ENCODE measurements at regions of chr13 and their contacts with region 1.

Region 1: DNA sequence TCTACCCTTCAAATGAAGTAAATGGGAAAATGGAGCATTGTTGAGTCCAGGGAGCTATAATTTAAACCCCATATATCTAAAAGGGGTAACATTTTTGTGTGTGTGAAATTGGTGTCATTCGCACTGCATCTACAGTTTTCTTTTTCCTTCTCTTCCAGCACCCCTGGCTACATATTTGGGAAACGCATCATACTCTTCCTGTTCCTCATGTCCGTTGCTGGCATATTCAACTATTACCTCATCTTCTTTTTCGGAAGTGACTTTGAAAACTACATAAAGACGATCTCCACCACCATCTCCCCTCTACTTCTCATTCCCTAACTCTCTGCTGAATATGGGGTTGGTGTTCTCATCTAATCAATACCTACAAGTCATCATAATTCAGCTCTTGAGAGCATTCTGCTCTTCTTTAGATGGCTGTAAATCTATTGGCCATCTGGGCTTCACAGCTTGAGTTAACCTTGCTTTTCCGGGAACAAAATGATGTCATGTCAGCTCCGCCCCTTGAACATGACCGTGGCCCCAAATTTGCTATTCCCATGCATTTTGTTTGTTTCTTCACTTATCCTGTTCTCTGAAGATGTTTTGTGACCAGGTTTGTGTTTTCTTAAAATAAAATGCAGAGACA is 28.6 kb downstream of the ALOX5AP start:
- DNase-seq: no peak
- H3K4me3 Mint-ChIP-seq: no peak overlapping the region
- H3K27ac Mint-ChIP-seq: no peak overlapping the region
- H3K4me1 Mint-ChIP-seq: peaks cover 25% of the 10 kb centered on the region
- H3K27me3 Mint-ChIP-seq: no peaks in the 10 kb centered on the region

Region 2: DNA sequence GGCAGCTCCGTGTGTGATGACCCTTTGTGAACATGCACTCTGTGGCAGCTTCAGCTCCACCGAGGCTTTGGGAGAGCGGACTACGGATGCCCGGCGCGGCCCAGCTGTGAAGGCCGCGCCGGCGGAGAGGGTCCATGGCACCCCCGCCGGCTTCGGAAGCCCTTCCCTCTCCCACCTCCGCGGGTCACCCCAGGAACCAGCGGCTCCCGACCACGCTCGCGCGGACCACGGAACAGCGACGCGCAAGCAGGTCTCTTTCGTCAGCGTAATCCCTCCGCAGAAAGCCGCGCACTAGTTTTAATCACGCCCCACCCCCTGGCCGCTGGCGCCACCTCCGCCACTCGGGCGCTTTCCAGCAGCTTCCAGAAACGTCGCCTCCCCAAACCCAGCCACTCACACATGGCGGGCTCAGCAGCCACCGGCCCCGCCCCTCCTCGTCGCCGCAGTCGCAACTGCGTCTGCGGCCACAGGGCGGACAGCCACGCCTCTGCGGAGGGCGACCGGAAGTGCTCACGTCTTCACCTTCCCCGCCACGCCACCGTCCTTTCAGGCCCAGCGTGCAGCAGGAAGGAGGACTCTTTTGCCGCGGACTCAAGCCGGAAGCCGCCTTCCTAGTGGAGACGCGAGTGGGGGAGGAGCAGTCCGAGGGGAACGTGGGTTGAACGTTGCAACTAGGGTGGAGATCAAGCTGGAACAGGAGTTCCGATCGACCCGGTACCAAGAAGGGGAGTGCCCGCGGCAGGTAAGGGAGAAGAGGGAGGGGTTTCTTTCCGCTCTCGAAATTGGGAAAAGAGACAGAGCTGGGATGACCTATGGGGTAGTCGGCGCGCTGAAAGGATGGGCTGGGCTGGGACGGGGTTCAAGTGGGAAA is 146.3 kb before region 1 on chr13 and contains the start of gene USPL1:
- CTCF ChIA-PET with region 1: no interaction called
- POLR2A ChIA-PET with region 1: no interaction called
- DNase-seq: peak; percentile 98
- H3K4me3 Mint-ChIP-seq: no peak within 1 kb of the TSS
- H3K27ac Mint-ChIP-seq: no peak within 1 kb of the TSS
- H3K4me1 Mint-ChIP-seq: peaks cover 20% of the 10 kb centered on the region
- H3K27me3 Mint-ChIP-seq: no peaks in the 10 kb centered on the region
- total RNA-seq, gene USPL1: 18.8 to 19.7 TPM

Region 3: DNA sequence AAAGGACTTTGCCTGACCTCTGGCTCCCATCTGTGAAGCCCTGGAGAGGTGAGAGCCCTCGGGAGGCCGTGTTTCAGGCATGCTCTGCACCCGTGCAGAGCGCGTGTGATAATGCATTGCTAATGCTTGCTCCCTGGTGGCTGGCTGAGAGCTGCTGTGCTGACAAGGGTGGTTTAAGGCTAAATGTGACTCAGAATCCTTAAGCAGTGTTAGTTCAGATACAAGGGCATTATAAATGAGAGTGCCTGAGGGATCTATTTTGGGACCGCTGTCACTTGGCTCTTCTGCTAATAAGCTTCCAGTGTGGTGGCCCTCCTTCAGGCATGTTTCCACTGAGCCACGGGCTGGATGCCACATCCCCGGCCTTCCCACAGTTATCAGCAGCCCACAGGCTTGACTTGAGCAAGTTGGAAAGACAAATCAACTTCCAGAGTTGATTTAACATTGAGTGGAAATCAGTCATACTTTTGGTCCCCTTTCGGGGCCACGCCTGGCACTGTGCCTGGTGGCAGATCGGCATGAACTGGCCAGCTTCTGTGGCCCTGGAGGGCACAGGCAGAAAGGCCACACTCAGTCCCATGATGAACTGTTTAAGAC is 11.6 kb before region 1 on chr13:
- CTCF ChIA-PET with region 1: interaction called, 11 read pairs
- POLR2A ChIA-PET with region 1: interaction called, 3 read pairs
- DNase-seq: no peak
- H3K4me3 Mint-ChIP-seq: no peak overlapping the region
- H3K27ac Mint-ChIP-seq: no peak overlapping the region
- H3K4me1 Mint-ChIP-seq: peaks cover 33% of the 10 kb centered on the region
- H3K27me3 Mint-ChIP-seq: no peaks in the 10 kb centered on the region

Region 4: DNA sequence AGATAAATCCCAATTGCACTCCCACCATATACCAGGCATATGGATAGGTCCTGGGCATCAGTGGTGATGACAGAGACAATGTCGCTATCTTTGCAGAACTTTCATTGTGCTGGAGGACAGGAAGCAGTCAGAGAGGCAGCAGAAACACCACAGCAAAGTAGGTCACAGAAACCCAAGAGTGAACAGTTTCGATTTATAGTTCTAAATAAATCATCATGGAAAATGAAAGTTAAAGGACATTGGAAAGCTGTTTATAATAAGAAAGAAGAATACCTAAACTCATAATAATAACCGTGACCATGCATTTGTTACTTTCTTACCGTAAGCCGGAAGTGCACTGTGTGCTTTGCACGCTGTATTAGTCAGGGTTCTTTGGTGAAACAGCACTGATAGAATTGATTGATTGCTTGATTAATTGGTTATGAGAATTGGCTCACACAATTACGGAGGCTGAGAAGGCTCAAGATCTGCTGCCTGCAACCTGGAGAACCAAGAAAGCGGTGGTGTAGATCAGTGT is 10.4 kb after region 1 on chr13:
- CTCF ChIA-PET with region 1: interaction called, 10 read pairs
- POLR2A ChIA-PET with region 1: no interaction called
- DNase-seq: peak; percentile 41
- H3K4me3 Mint-ChIP-seq: peak overlapping the region; percentile 9
- H3K27ac Mint-ChIP-seq: peak overlapping the region; percentile 89
- H3K4me1 Mint-ChIP-seq: peaks cover 27% of the 10 kb centered on the region
- H3K27me3 Mint-ChIP-seq: peaks cover 12% of the 10 kb centered on the region